ENCODE measurements at regions of chr4 and their contacts with region 1.

Region 1: GRCh38 chr4:16289897-16290554 is 63.8 kb upstream of the TAPT1 start:
- DNase-seq: peak; percentile 86
- H3K4me3 ChIP-seq: peak overlapping the region; percentile 18
- H3K27ac ChIP-seq: peak overlapping the region; percentile 56
- H3K4me1 ChIP-seq: peaks cover 23% of the 10 kb centered on the region
- H3K27me3 ChIP-seq: no peaks in the 10 kb centered on the region
- CTCF ChIP-seq: peak; percentile 71

Region 2: GRCh38 chr4:16067515-16067914 is 222.5 kb before region 1 on chr4:
- CTCF ChIA-PET with region 1: no interaction called
- POLR2A ChIA-PET with region 1: no interaction called
- intact Hi-C with region 1: no loop called
- DNase-seq: no peak
- H3K4me3 ChIP-seq: no peak overlapping the region
- H3K27ac ChIP-seq: no peak overlapping the region
- H3K4me1 ChIP-seq: peaks cover 4% of the 10 kb centered on the region
- H3K27me3 ChIP-seq: no peaks in the 10 kb centered on the region
- CTCF ChIP-seq: no peak

Region 3: GRCh38 chr4:16253127-16253960 is 36.7 kb before region 1 on chr4:
- CTCF ChIA-PET with region 1: no interaction called
- POLR2A ChIA-PET with region 1: no interaction called
- intact Hi-C with region 1: no loop called
- DNase-seq: peak; percentile 36
- H3K4me3 ChIP-seq: no peak overlapping the region
- H3K27ac ChIP-seq: no peak overlapping the region
- H3K4me1 ChIP-seq: no peaks in the 10 kb centered on the region
- H3K27me3 ChIP-seq: no peaks in the 10 kb centered on the region
- CTCF ChIP-seq: no peak

Region 4: GRCh38 chr4:16443504-16444088 is 153.6 kb after region 1 on chr4:
- CTCF ChIA-PET with region 1: no interaction called
- POLR2A ChIA-PET with region 1: no interaction called
- intact Hi-C with region 1: loop called (anchors 1 kb)
- DNase-seq: peak; percentile 74
- H3K4me3 ChIP-seq: no peak overlapping the region
- H3K27ac ChIP-seq: no peak overlapping the region
- H3K4me1 ChIP-seq: no peaks in the 10 kb centered on the region
- H3K27me3 ChIP-seq: no peaks in the 10 kb centered on the region
- CTCF ChIP-seq: peak; percentile 74

Region 5: DNA sequence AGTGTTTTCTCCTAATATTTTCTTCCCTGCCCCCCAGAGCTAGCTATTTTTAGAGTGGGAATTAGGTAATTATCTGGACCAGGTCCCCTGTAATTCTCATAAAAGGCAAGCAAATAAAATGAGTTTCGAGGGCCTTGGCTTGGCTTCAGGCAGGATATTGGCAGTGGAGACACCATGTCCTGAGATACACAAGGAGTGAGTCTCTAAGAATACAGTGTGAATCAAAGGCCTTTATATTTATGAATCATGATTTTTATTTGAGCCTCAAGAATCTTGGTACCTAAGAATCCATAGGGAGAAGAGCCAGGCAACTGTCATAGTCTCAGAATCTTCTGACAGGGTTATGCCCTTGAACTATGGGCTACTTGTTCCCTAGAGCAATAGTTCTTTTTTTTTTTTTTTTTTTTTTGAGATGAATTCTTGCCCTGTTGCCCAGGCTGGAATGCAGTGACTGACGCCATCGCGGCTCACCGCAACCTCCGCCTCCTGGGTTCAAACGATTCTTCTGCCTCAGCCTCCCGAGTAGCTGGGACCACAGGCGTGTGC is 403.0 kb after region 1 on chr4:
- CTCF ChIA-PET with region 1: no interaction called
- POLR2A ChIA-PET with region 1: no interaction called
- intact Hi-C with region 1: loop called (anchors 2 kb)
- DNase-seq: no peak
- H3K4me3 ChIP-seq: no peak overlapping the region
- H3K27ac ChIP-seq: peak overlapping the region; percentile 78
- H3K4me1 ChIP-seq: peaks cover 53% of the 10 kb centered on the region
- H3K27me3 ChIP-seq: no peaks in the 10 kb centered on the region
- CTCF ChIP-seq: no peak

Region 6: DNA sequence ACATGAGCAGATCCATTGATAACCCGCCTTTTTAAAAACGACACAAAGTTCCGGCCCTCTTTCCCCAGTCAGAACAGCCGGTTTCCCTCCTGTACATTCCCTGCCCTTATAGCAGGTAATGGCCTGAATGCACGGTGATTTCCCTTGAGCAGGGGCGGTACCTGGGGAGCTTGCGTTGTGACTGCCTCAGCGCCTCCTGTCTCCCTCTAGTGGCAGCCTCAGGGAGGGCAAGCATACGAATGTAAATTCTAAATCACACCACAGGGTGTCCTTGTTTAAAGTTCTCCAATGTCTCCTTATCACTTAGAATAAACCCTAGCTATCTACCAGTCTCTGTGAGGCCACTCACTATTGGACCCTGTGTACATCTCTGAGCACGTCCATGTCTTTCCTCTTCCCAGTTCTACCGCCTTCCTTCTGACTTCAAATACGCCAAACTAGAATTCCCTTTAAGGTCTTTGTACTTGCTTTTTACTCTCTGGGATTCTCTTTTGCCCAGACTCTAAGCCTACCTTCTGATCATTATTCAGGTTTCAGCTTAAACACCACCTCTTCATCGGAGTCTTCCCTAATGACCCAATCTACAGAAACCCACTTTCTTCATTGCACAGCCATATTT is 626.8 kb after region 1 on chr4:
- CTCF ChIA-PET with region 1: no interaction called
- POLR2A ChIA-PET with region 1: no interaction called
- intact Hi-C with region 1: loop called (anchors 10 kb)
- DNase-seq: peak; percentile 82
- H3K4me3 ChIP-seq: no peak overlapping the region
- H3K27ac ChIP-seq: no peak overlapping the region
- H3K4me1 ChIP-seq: no peaks in the 10 kb centered on the region
- H3K27me3 ChIP-seq: no peaks in the 10 kb centered on the region
- CTCF ChIP-seq: peak; percentile 97

Region 7: DNA sequence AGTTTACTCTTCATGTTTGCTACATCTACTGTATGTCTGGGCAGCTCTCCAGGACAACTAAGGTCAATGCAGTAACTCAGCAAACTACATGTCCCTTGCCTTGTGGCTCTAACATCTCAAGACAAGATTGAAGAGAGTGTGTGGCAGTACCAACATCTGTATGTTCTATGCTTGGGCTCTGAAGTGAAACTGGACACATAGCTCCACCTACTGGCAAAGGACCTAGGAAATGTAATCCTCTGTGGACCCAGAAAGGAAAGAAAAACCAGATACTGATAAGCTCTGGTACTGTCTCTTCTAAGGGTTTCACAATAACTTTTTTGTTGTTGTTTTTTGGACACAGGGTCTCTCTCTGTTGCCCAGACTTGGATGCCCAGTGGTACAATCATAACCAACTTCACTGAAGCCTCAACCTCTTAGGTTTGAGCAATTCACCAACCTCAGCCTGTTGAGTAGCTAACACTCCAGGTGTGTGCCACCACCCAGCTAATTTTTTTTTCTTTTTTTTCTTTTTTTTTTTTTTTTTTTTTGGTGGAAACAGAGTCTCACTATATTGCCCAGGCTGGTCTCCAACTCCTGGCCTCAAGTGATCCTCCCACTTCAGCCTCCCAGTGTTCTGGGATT is 1157.8 kb after region 1 on chr4:
- CTCF ChIA-PET with region 1: interaction called, 3 read pairs
- POLR2A ChIA-PET with region 1: no interaction called
- intact Hi-C with region 1: loop called (anchors 5 kb)
- DNase-seq: peak; percentile 86
- H3K4me3 ChIP-seq: no peak overlapping the region
- H3K27ac ChIP-seq: no peak overlapping the region
- H3K4me1 ChIP-seq: no peaks in the 10 kb centered on the region
- H3K27me3 ChIP-seq: no peaks in the 10 kb centered on the region
- CTCF ChIP-seq: peak; percentile 82